CD8-positive, alpha-beta T cell (primary cell): ENCODE measurements at regions of chr3 and their contacts with region 1.

Region 1: DNA sequence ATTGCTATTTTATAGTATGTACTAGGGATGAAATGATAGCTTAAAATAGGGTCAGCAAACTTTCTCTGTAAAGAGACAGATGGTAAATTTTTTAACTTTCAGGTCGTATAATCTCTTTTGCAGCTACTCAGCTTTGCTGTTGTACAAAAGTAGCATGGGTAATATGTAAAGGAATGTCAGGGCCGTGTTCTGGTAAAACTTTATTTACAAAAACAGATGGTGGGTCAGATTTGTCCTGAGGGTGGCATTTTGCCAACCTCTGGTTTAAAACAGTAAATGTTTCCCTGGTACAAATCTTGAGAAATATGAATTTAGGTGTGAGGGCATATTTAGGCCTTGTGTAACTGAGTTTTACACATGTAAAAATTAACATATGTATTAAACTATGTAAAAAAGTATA is 18.6 kb downstream of the NMD3 start:
- DNase-seq: no peak
- ATAC-seq: no peak
- H3K4me3 ChIP-seq: no peak overlapping the region
- H3K4me3 Mint-ChIP-seq: no peak overlapping the region
- H3K27ac ChIP-seq: no peak overlapping the region
- H3K27ac Mint-ChIP-seq: no peak overlapping the region
- H3K4me1 ChIP-seq: no peaks in the 10 kb centered on the region
- H3K4me1 Mint-ChIP-seq: peaks cover 17% of the 10 kb centered on the region
- H3K27me3 ChIP-seq: no peaks in the 10 kb centered on the region
- H3K27me3 Mint-ChIP-seq: no peaks in the 10 kb centered on the region
- CTCF ChIP-seq: no peak

Region 2: DNA sequence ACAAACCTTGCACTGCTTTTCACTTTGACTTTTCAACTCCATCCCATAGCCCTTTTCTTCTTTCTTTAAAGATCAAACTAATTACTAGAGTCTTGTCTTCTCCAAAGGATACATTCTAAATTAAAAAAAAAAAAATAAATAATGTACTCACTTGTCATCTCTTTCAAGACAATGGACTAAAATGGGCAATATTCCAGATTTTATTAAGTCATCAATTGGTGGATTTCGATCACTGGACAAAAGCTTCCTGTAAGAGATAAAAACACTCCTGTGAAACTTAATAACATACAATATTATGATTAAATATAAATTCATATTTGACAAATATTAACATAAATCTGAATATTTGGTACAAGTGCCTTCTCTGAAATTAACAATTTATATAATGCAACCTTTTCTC is 708.4 kb before region 1 on chr3:
- CTCF ChIA-PET with region 1: no interaction called
- POLR2A ChIA-PET with region 1: interaction called, 4 read pairs
- intact Hi-C with region 1: loop called in 1 of 2 experiments (anchors 10 kb)
- DNase-seq: no peak
- ATAC-seq: no peak
- H3K4me3 ChIP-seq: no peak overlapping the region
- H3K4me3 Mint-ChIP-seq: no peak overlapping the region
- H3K27ac ChIP-seq: no peak overlapping the region
- H3K27ac Mint-ChIP-seq: no peak overlapping the region
- H3K4me1 ChIP-seq: no peaks in the 10 kb centered on the region
- H3K4me1 Mint-ChIP-seq: no peaks in the 10 kb centered on the region
- H3K27me3 ChIP-seq: no peaks in the 10 kb centered on the region
- H3K27me3 Mint-ChIP-seq: no peaks in the 10 kb centered on the region
- CTCF ChIP-seq: no peak

Region 3: GRCh38 chr3:161171113-161171512 is 68.6 kb before region 1 on chr3:
- CTCF ChIA-PET with region 1: no interaction called
- POLR2A ChIA-PET with region 1: no interaction called
- intact Hi-C with region 1: no loop called
- DNase-seq: no peak
- ATAC-seq: no peak
- H3K4me3 ChIP-seq: no peak overlapping the region
- H3K4me3 Mint-ChIP-seq: no peak overlapping the region
- H3K27ac ChIP-seq: no peak overlapping the region
- H3K27ac Mint-ChIP-seq: no peak overlapping the region
- H3K4me1 ChIP-seq: no peaks in the 10 kb centered on the region
- H3K4me1 Mint-ChIP-seq: no peaks in the 10 kb centered on the region
- H3K27me3 ChIP-seq: no peaks in the 10 kb centered on the region
- H3K27me3 Mint-ChIP-seq: peaks cover 2% of the 10 kb centered on the region
- CTCF ChIP-seq: no peak